ENCODE measurements at regions of chr3 and their contacts with region 1.

Region 1: DNA sequence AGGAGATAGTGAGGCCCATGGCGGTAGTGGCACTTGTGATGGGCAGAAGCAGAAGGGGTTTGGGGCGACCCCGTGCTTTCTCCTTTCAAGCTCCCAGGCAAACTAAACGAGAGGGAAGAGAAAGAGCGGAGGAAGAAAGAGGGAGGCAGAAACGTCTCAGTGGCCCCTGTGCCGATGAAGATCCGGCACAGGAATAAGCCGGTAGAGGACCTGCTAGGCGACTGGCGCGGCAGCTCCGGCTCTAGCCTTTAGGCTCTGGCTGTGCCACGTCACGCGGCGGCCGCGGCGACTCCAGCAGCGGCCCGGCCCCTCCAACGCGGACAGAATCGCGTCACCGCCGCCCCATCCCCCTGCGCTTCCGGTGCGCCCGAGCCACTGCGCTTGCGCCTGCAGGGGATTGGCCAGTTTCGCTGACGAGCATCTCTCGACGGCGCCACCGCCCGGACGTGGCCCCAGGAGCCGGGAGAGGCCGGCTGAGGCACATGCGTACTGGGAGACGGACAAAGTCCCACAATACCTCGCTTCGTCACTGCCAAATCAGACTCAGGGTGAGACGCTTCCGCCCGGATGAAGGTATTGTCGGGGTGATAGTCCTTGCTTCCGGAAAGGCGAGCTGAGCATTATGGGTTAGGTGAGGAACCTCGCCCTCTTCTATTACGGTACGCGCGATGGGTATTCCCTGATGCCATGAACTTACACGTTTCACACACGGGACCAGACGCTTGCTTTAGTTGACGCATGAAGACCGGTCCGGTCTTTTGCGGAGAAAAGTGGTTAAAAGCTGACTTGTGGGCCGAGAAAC is at the start of gene ARF4:
- DNase-seq: peak; percentile 99
- H3K4me3 Mint-ChIP-seq: peak within 1 kb of the TSS; percentile 97
- H3K27ac Mint-ChIP-seq: peak within 1 kb of the TSS; percentile 100
- H3K4me1 Mint-ChIP-seq: peaks cover 46% of the 10 kb centered on the region
- H3K27me3 Mint-ChIP-seq: no peaks in the 10 kb centered on the region
- total RNA-seq, gene ARF4: 49.0 to 50.8 TPM

Region 2: GRCh38 chr3:56783644-56784447 is 813.5 kb before region 1 on chr3:
- CTCF ChIA-PET with region 1: no interaction called
- intact Hi-C with region 1: loop called (anchors 10 kb)
- DNase-seq: peak; percentile 88
- H3K4me3 Mint-ChIP-seq: peak overlapping the region; percentile 70
- H3K27ac Mint-ChIP-seq: peak overlapping the region; percentile 98
- H3K4me1 Mint-ChIP-seq: peaks cover 95% of the 10 kb centered on the region
- H3K27me3 Mint-ChIP-seq: no peaks in the 10 kb centered on the region

Region 3: GRCh38 chr3:57397175-57398026 is 199.9 kb before region 1 on chr3:
- CTCF ChIA-PET with region 1: interaction called, 6 read pairs
- intact Hi-C with region 1: loop called (anchors 1 kb)
- DNase-seq: peak; percentile 77
- H3K4me3 Mint-ChIP-seq: no peak overlapping the region
- H3K27ac Mint-ChIP-seq: peak overlapping the region; percentile 20
- H3K4me1 Mint-ChIP-seq: peaks cover 11% of the 10 kb centered on the region
- H3K27me3 Mint-ChIP-seq: no peaks in the 10 kb centered on the region

Region 4: DNA sequence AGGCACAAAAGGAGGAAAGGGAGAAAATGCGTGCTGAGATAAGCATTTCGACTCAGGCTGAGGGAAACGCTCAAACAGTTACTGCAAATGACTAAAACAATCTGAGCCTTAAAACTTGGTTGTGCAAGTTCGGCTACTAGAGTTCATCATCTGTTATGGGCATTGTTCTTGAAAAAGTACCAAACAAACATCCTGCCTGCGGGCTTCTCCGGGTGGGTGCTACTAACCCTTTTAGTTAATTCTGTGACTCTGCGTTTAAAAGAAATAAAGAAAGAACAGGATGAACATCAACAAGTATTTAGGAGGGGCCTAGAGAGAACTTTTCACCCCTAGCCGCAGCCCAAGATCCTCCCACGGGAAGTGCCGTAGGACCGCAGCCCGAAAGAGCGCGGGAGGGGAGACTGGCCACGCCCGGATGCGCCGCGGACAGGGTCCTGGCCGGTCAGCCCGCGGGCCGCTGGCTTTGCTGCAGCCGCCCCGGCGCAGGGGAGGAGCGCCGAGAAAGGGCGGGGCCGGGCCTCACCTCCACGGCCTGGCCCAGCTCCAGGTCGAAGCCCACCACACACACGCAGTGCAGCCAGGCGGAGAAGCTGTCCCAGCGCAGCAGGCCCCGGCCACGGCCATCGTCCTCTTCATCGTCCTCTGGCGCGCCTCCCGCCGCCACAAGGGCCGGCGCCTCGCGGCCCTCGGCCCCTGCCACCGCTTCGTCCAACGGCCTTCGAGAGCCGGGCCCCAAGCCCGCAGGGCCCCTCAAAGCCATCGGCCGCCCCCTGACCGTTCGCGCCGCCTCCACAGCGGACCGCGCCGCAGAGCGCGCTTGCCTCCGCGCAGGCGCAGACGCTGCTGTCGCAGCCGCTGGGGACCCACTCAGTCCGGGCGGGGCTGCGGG is 95.2 kb after region 1 on chr3 and contains the start of gene DENND6A:
- CTCF ChIA-PET with region 1: no interaction called
- intact Hi-C with region 1: loop called (anchors 1 kb)
- DNase-seq: peak; percentile 70
- H3K4me3 Mint-ChIP-seq: peak within 1 kb of the TSS; percentile 89
- H3K27ac Mint-ChIP-seq: peak within 1 kb of the TSS; percentile 90
- H3K4me1 Mint-ChIP-seq: peaks cover 35% of the 10 kb centered on the region
- H3K27me3 Mint-ChIP-seq: no peaks in the 10 kb centered on the region
- total RNA-seq, gene DENND6A: 12.3 to 12.4 TPM

Region 5: GRCh38 chr3:57787867-57788623 is 190.7 kb after region 1 on chr3:
- CTCF ChIA-PET with region 1: no interaction called
- intact Hi-C with region 1: loop called (anchors 1 kb)
- DNase-seq: no peak
- H3K4me3 Mint-ChIP-seq: no peak overlapping the region
- H3K27ac Mint-ChIP-seq: no peak overlapping the region
- H3K4me1 Mint-ChIP-seq: peaks cover 31% of the 10 kb centered on the region
- H3K27me3 Mint-ChIP-seq: no peaks in the 10 kb centered on the region

Region 6: GRCh38 chr3:57983734-57984518 is 386.6 kb after region 1 on chr3:
- CTCF ChIA-PET with region 1: no interaction called
- intact Hi-C with region 1: loop called (anchors 2 kb)
- DNase-seq: peak; percentile 83
- H3K4me3 Mint-ChIP-seq: no peak overlapping the region
- H3K27ac Mint-ChIP-seq: peak overlapping the region; percentile 77
- H3K4me1 Mint-ChIP-seq: peaks cover 22% of the 10 kb centered on the region
- H3K27me3 Mint-ChIP-seq: no peaks in the 10 kb centered on the region

Region 7: DNA sequence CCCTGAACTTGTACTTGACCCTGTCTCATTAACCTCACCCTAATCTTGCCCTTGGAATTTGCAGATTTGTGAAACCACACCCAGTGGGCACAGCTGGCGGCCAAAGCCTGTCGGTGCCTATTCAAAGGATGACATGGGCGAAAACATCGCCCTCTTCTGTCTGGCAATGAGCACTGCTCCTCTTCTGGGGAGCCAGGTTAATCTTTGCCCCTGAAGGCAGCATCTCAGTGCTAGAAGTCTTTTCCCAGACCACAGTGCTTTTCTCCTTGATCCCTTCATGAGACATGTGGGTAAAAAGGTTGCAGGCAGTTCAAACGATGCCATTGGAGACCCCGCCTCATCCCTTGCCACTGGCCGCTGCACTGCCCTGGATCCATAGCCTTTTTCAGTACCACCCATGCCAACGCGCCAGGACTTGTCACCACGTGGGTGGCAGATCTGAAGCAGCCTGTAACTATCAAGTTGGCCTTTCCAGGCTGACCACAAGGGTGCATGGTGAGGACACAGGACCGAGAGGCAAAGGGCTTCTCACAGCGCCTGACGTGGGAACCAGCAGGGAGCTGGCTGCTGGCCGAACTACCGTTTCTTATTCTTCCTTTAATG is 620.0 kb after region 1 on chr3:
- CTCF ChIA-PET with region 1: no interaction called
- intact Hi-C with region 1: loop called (anchors 2 kb)
- DNase-seq: peak; percentile 73
- H3K4me3 Mint-ChIP-seq: no peak overlapping the region
- H3K27ac Mint-ChIP-seq: no peak overlapping the region
- H3K4me1 Mint-ChIP-seq: peaks cover 33% of the 10 kb centered on the region
- H3K27me3 Mint-ChIP-seq: no peaks in the 10 kb centered on the region

Measured in activated naive CD4-positive, alpha-beta T cell treated with anti-CD3 and anti-CD28 coated beads for 36 hours (primary cell).